ENCODE measurements at regions of chr11 and their contacts with region 1.

Region 1: GRCh38 chr11:83895516-83895915 is 609.3 kb upstream of the CCDC90B start:
- DNase-seq: no peak
- H3K4me3 ChIP-seq: no peak overlapping the region
- H3K27ac ChIP-seq: no peak overlapping the region
- H3K4me1 ChIP-seq: no peaks in the 10 kb centered on the region
- H3K27me3 ChIP-seq: no peaks in the 10 kb centered on the region
- CTCF ChIP-seq: no peak

Region 2: DNA sequence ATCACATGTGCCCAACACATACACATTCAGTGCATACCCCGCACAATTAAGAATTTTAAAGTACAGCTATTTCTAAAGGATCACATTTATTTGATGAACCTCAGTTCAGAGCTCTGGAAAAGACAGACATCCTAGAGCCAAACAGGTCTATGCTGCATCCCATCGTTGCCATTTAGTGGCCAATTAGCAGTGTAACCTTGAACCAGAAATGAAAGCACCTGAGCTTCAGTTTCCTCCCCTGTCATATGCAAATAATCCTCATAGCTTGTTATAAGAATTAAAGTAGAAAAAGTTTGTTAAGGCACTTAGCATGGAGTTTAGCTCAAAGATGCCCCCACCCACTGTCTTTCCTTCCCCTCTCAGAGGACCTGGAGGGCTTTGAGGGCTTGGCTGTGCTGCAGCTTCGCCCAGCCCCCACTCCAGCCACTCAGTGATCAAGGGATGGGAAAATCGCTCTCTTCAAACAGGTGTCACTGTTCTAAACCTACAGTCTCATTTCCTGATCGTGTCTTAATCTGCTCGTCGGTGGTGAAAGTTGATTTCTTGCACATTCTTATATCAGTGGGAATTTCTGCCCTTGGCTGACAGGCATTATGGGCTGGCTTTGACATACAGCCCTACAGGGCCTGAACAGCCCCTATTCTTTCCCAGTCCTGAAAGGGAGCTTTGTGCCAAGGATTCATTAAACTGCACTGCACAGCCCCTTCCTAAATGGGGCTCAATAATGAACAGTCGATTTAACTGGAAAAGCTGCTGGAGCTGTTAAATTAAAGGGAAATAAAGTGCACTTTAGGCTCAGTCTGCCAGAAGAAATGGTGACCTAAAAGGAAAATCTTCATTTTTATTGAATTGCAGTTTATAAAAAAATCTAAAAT is 1138.5 kb before region 1 on chr11:
- CTCF ChIA-PET with region 1: no interaction called
- POLR2A ChIA-PET with region 1: interaction called, 10 read pairs
- intact Hi-C with region 1: no loop called
- DNase-seq: no peak
- H3K4me3 ChIP-seq: no peak overlapping the region
- H3K27ac ChIP-seq: no peak overlapping the region
- H3K4me1 ChIP-seq: no peaks in the 10 kb centered on the region
- H3K27me3 ChIP-seq: no peaks in the 10 kb centered on the region
- CTCF ChIP-seq: no peak

Region 3: DNA sequence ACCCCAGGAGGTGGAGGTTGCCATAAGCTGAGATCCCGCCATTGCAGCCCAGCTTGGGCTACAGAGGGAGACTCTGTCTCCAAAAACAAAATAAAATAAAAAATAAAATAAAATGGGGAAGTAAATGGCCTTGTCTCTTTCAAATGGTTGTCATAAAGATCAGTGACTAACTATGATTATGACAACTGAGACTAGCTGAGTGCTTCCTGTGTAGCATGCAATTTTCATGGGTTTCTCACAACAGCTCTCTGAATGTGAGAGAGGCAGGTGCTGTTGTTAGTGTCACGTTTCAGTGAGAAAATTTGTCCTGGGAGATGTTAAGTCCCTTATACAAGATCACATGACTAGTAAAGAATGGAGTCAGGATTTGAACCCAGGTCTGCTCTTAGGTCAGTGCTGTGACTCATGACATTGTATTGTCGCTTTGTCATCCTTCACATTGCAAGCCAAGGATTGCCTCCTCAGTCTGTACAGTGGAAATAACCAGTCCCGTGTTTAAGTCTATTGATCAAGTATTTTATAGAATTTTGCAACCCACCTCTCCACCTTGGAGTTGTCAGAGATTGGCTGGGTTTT is 446.1 kb before region 1 on chr11:
- CTCF ChIA-PET with region 1: no interaction called
- POLR2A ChIA-PET with region 1: no interaction called
- intact Hi-C with region 1: no loop called
- DNase-seq: no peak
- H3K4me3 ChIP-seq: no peak overlapping the region
- H3K27ac ChIP-seq: no peak overlapping the region
- H3K4me1 ChIP-seq: no peaks in the 10 kb centered on the region
- H3K27me3 ChIP-seq: no peaks in the 10 kb centered on the region
- CTCF ChIP-seq: no peak

Region 4: GRCh38 chr11:83933008-83933407 is 37.5 kb after region 1 on chr11:
- CTCF ChIA-PET with region 1: no interaction called
- POLR2A ChIA-PET with region 1: no interaction called
- intact Hi-C with region 1: no loop called
- DNase-seq: no peak
- H3K4me3 ChIP-seq: no peak overlapping the region
- H3K27ac ChIP-seq: no peak overlapping the region
- H3K4me1 ChIP-seq: no peaks in the 10 kb centered on the region
- H3K27me3 ChIP-seq: no peaks in the 10 kb centered on the region
- CTCF ChIP-seq: no peak